ENCODE measurements at regions of chr7 and their contacts with region 1.

Region 1: DNA sequence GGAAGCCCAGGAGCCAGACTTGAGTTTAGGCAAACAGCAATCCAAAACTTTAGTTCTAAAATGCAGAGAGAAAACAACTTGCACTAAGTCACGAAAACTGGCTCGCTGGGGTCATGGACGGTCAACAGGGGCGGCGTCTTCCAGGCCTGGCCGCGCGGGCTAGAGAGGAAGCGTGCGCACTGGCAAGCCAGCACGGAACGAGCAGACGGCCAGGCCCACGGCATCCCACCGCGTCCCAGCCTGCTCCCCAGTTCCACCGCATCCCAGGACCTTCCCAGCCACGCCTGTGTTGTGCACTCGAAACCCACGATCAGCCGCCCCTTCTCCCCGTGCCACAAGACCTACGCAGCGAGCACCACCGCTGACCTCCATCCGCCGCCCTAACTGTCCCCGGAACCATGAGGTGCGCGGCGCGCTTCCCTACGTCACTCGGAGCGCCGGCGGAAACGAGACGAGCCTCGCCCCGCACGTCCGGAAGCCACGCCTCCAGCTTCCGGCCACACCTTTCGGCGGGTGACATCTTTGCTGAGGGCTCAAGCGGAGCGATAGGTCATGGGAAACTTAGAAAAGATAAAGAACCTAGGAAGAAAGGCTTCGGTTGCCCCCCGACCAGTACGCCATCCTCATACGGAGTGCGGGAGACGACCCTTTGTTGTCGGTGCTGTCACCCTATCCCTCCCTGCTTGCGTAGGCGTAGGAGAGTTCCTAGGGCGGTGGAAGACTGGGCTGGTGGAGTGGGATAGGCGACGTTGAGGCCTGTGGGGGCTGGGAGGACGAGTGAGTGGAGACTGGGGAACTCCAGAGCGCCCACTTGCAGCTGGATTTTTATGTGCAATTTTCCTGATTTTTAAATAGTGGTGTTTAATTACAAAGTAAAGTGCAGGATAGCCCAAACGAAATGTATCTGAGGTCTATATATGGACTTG is at the start of gene TBRG4:
- DNase-seq: peak; percentile 97
- ATAC-seq: peak; percentile 94
- H3K4me3 Mint-ChIP-seq: peak within 1 kb of the TSS; percentile 90
- H3K27ac Mint-ChIP-seq: peak within 1 kb of the TSS; percentile 95
- H3K4me1 Mint-ChIP-seq: peaks cover 32% of the 10 kb centered on the region
- H3K27me3 Mint-ChIP-seq: no peaks in the 10 kb centered on the region
- CTCF ChIP-seq: no peak
- total RNA-seq, gene TBRG4: 197 TPM

Region 2: DNA sequence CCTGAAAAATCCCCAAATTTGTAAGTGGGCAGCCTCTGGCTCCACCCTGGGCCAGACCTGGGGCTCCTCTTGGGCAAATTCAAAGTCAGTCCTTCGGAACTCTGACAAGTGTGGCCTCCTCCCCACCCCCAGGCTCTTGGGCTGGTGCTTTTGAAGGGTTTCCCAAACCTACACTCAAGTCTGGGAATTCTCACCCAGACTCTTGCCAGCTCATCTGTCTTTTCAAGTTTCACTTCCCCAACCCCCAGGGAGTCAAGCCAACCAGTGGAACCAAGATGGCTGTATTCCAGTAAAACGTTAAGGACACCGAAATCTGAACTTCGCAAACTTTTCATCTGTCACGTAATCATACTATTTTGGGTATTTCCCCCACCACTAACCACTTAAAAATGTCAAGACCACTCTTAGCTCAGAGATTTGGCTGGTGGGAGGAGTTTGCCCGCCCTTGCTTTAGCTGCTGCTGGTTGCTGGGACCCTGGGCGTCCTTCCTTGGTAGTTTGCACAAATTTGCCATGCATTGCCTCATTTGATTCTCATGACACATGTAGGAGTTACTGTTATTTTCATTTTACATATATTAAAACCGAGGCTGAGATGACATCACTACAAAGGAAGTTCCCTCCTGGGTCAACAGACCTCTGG is 131.0 kb before region 1 on chr7:
- CTCF ChIA-PET with region 1: interaction called, 5 read pairs
- POLR2A ChIA-PET with region 1: interaction called, 20 read pairs
- intact Hi-C with region 1: loop called (anchors 1 kb)
- DNase-seq: peak; percentile 97
- ATAC-seq: peak; percentile 52
- H3K4me3 Mint-ChIP-seq: peak overlapping the region; percentile 100
- H3K27ac Mint-ChIP-seq: peak overlapping the region; percentile 100
- H3K4me1 Mint-ChIP-seq: peaks cover 60% of the 10 kb centered on the region
- H3K27me3 Mint-ChIP-seq: no peaks in the 10 kb centered on the region
- CTCF ChIP-seq: no peak

Region 3: DNA sequence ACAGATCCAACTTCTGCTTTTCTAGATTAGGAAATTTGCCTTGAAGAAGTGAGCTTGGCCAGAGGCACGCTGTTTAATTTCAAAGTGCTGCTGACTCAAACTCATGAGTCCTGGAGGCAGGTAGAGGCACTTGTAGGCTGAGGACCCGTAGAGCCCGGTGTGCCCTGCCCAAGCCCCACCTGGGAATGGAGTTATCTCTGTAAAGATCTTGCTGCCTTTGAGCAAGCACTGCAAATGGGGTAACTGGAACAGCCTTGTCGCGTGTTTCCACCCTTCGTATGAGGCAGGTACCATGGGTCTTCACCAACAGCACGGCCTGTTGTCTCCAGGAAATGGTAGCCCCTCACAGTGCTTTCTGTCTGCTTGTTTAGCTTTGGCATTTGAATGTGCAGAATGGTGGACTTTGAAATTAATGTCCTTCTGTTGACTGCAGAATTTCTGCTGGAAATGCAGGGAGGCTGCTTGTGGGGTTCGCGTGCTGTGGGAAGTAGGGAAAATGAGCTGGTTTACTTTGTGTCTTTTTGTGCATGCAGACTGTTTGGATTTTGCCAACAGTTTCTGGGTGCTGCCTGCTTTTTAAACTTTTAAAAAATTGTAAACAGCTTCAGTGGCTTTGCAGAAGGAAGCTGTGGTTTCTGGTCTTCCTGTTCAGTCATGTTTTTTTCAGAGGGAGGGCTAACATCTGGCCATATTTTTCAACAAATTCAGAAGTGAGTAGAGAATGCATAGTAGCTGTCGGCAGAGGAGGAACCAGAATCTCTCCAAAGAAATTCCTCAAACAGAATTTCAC is 84.4 kb before region 1 on chr7:
- CTCF ChIA-PET with region 1: no interaction called
- POLR2A ChIA-PET with region 1: interaction called, 19 read pairs
- intact Hi-C with region 1: no loop called
- DNase-seq: peak; percentile 35
- ATAC-seq: peak; percentile 47
- H3K4me3 Mint-ChIP-seq: peak overlapping the region; percentile 75
- H3K27ac Mint-ChIP-seq: peak overlapping the region; percentile 91
- H3K4me1 Mint-ChIP-seq: peaks cover 64% of the 10 kb centered on the region
- H3K27me3 Mint-ChIP-seq: no peaks in the 10 kb centered on the region
- CTCF ChIP-seq: no peak

Region 4: GRCh38 chr7:45033261-45033930 is 78.2 kb before region 1 on chr7:
- CTCF ChIA-PET with region 1: no interaction called
- POLR2A ChIA-PET with region 1: interaction called, 19 read pairs
- intact Hi-C with region 1: no loop called
- DNase-seq: peak; percentile 51
- ATAC-seq: peak; percentile 55
- H3K4me3 Mint-ChIP-seq: peak overlapping the region; percentile 11
- H3K27ac Mint-ChIP-seq: peak overlapping the region; percentile 85
- H3K4me1 Mint-ChIP-seq: peaks cover 78% of the 10 kb centered on the region
- H3K27me3 Mint-ChIP-seq: no peaks in the 10 kb centered on the region
- CTCF ChIP-seq: no peak

Region 5: DNA sequence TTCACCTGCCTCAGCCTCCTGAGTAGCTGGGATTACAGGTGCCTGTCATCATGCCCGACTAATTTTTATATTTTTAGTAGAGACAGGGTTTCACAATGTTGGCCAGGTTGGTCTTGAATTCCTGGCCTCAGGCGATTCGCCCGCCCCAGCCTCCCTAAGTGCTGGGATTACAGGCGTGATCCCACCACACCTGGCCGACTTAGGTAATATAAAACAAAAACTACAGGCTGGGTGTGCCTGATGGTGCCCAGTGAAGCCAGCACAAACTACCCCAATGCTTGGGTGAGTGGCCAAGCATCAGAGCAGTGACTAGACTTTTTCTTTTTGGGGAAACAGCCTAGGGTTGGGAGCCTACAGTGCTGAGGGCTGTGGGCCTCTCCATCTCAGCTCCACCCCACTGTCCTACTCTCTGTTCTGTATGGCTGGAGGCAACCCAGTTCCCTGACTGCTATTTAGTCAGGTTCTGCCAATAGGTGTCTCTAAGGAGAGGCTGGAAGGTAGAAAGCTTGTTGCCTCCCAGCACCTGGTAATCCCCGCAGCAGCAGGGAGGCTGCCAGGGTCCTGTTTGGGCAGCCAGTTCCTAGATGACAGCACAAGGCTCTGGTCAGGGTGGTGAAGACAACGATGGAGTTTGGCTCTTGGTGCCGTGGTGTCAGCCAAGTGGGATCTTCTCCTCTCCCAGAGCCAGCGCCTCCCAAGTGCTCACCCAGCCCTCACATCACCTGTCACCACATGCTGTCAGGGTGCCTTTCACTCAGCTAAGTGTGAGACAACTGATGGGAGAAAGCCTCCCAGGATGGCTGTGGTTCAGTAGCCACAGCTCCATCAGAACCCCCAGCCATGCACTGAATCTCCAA is 12.3 kb before region 1 on chr7:
- CTCF ChIA-PET with region 1: no interaction called
- POLR2A ChIA-PET with region 1: interaction called, 12 read pairs
- intact Hi-C with region 1: no loop called
- DNase-seq: no peak
- ATAC-seq: peak; percentile 47
- H3K4me3 Mint-ChIP-seq: no peak overlapping the region
- H3K27ac Mint-ChIP-seq: no peak overlapping the region
- H3K4me1 Mint-ChIP-seq: no peaks in the 10 kb centered on the region
- H3K27me3 Mint-ChIP-seq: no peaks in the 10 kb centered on the region
- CTCF ChIP-seq: no peak

Region 6: DNA sequence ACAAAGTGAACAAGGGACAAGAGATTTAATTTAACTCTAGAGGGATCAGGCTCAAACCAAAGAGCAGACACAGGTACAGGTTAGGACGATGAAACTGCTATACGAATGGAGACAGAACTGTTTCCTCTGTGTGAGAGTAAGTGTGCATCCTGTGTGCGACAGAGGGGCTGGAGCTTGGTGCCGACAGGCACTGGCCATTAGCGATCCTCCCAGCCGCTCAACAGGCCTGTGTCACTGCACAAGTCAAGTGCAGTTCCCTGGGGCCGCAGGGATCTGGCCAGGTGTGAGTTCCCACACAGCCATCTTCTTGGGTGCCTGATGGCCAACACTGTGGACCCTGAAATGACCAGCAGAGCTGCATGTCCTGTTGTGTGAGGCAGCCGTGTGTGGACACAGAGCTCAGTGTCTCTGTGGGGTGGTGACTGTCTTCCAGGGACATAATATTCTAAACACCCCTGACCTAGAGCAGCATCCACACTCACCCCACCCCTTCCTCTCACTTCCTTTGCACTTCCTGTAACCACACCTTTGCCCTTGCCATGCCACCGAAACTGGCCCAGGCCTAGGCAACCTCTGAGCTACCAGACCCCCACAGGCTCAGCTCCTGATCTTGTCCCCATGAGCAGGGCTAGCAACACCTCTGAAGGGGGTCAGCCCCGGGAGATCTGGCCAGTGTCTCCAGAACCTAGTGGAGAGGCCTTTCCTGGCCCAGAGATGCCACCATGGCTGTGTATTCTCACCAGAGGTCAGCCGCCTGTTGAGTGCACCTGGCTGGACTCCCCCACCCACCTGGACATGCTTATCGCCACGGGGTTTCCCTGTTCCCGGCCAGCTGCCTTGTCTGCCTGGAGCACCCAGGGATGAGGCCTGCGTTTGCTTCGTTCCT is 11.7 kb after region 1 on chr7:
- CTCF ChIA-PET with region 1: interaction called, 3 read pairs
- POLR2A ChIA-PET with region 1: interaction called, 19 read pairs
- intact Hi-C with region 1: no loop called
- DNase-seq: no peak
- ATAC-seq: peak; percentile 48
- H3K4me3 Mint-ChIP-seq: no peak overlapping the region
- H3K27ac Mint-ChIP-seq: peak overlapping the region; percentile 85
- H3K4me1 Mint-ChIP-seq: peaks cover 13% of the 10 kb centered on the region
- H3K27me3 Mint-ChIP-seq: no peaks in the 10 kb centered on the region
- CTCF ChIP-seq: no peak

Region 7: GRCh38 chr7:45420843-45421495 is 309.4 kb after region 1 on chr7:
- CTCF ChIA-PET with region 1: no interaction called
- POLR2A ChIA-PET with region 1: no interaction called
- intact Hi-C with region 1: no loop called
- DNase-seq: no peak
- ATAC-seq: no peak
- H3K4me3 Mint-ChIP-seq: no peak overlapping the region
- H3K27ac Mint-ChIP-seq: no peak overlapping the region
- H3K4me1 Mint-ChIP-seq: no peaks in the 10 kb centered on the region
- H3K27me3 Mint-ChIP-seq: peaks cover 16% of the 10 kb centered on the region
- CTCF ChIP-seq: no peak

Region 8: DNA sequence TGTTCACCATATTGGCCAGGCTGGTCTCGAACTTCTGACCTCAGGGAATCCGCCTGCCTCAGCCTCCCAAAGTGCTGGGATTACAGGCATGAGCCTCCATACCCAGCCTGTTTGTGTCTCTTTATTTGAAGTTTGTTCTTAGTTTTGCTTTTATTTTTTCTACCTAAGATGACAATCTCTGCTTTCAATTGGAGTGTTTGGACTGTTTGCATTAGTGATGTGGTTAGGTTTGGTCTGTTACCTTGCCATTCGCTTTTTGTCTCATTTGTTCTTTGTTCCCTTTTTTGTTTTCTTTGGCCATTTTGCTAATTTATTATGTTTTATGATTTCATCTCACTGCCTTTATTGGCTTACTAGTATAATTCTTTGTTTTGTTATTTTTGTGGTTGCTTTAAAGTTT is 525.2 kb after region 1 on chr7:
- CTCF ChIA-PET with region 1: no interaction called
- POLR2A ChIA-PET with region 1: no interaction called
- intact Hi-C with region 1: no loop called
- DNase-seq: no peak
- ATAC-seq: no peak
- H3K4me3 Mint-ChIP-seq: no peak overlapping the region
- H3K27ac Mint-ChIP-seq: no peak overlapping the region
- H3K4me1 Mint-ChIP-seq: no peaks in the 10 kb centered on the region
- H3K27me3 Mint-ChIP-seq: peaks cover 6% of the 10 kb centered on the region
- CTCF ChIP-seq: no peak

Region 9: DNA sequence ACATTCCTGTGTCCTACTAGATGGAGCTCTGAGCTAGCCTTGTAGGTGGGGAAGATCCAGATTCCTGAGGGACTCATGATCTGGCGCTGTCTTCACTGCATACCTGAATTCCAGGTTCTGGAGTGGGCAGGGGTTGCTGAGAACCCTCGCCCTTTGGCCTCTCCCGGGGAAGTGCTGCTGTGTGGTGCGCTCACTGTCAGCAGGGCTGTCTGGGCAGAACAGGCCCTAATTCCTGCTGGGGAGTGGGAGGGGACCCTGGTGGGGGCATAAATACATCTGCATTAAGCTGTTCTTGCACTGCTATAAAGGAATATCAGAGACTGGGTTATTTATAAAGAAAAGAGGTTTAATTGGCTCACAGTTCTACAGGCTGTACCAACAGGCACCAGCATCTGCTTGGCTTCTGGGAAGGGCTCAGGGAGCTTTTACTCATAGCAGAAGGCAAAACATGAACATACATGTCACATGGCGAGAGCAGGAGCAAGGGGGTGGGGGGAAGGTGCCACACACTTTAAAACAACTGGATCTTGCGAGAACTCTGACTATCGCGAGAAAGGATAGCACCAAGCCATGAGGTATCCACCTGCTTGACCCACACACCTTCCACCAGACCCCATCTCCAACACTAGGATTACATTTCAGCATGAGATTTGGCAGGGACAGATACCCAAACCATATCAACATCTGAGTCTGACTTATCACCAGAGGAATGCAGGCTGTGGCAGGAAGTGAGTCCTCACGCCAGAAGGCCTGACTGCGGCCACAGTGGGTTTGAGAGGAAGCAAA is 577.6 kb after region 1 on chr7:
- CTCF ChIA-PET with region 1: no interaction called
- POLR2A ChIA-PET with region 1: no interaction called
- intact Hi-C with region 1: no loop called
- DNase-seq: no peak
- ATAC-seq: no peak
- H3K4me3 Mint-ChIP-seq: no peak overlapping the region
- H3K27ac Mint-ChIP-seq: no peak overlapping the region
- H3K4me1 Mint-ChIP-seq: no peaks in the 10 kb centered on the region
- H3K27me3 Mint-ChIP-seq: no peaks in the 10 kb centered on the region
- CTCF ChIP-seq: no peak

Measured in activated CD8-positive, alpha-beta T cell treated with anti-CD3 and anti-CD28 coated beads for 36 hours (primary cell).